ENCODE measurements at regions of chr14 and their contacts with region 1.

Region 1: DNA sequence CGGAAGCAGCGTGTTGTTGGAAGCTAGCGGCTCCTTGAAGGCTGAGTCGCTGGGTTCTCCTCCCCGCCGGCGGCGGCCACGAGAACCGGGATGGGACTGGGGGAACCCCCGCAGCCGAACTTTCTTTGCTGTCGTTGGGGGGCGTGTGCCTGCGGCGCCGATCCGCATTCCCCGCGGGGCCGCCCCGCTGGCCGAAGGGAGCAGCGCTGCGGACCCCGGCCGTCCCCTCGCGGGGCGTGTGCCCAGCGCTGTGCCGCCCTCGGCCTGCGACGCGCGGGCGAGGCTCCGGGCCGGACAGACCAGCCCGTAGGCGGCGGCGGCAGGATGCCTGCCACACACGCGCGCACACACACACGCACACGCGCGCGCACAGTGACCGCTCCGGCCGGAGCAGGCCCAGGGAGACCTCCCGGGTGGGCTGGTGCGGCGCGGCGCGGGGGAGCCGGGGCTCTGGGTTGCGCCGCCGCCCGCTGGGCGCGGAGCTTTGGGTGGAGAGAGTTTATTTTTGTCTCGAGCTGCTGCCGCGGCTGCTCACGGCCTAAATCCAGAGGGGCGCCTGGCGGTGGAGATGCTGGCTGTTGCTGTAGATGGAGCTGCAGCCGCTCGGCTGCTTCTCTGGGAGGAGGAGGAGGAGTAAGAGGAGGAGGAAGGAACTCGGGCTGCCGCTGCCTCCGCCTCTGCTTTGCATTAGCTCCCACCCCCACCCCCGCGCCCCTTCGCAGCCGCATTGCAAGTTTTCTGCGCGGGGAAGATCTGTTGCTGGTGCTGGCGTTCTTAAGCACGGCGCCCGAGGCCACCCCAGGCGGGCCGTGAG is at the start of gene SAMD4A:
- DNase-seq: no peak
- ATAC-seq: peak; percentile 46
- H3K4me3 ChIP-seq: peak within 1 kb of the TSS; percentile 79
- H3K27ac ChIP-seq: no peak within 1 kb of the TSS
- H3K4me1 ChIP-seq: peaks cover 12% of the 10 kb centered on the region; the same call in 1 of the 2 replicates
- H3K27me3 ChIP-seq: peaks cover 0 to 3% of the 10 kb centered on the region in 2 experiments; a peak in 1 of 4 replicates
- CTCF ChIP-seq: peak in 1 of 3 experiments; percentile 34; a peak in 2 of 6 replicates
- EP300 ChIP-seq: no peak
- POLR2A ChIP-seq: no peak
- RAD21 ChIP-seq: 0 out of 2 replicates have a peak, but pooled peaks have one; percentile 14
- polyA plus RNA-seq, gene SAMD4A: 0.29 to 0.33 TPM

Region 2: DNA sequence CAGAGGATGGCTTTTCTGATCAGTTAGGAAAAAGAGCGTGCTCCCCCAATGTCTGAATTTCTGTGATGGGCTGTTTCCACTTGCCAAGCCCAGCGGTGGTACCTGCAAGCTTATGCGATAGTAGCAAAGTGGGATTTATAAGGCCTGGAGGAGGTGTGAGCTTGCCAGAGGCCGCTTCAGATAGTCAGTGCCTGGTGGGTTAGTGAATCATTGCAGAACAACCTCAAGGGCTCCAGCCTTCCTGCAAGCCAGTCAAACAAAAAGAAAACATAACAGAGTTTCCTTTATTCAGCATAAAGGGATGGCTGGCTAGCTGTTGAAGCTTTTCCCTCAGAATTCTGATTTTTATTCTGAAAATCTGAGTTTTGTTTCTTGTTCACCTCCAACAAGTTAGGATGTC is 602.4 kb before region 1 on chr14:
- CTCF ChIA-PET with region 1: no interaction called
- POLR2A ChIA-PET with region 1: no interaction called
- RAD21 ChIA-PET with region 1: no interaction called
- SMC1A ChIA-PET with region 1: no interaction called
- in situ Hi-C with region 1: no loop called
- intact Hi-C with region 1: no loop called
- DNase-seq: no peak
- ATAC-seq: no peak
- H3K4me3 ChIP-seq: no peak overlapping the region
- H3K27ac ChIP-seq: no peak overlapping the region
- H3K4me1 ChIP-seq: no peaks in the 10 kb centered on the region
- H3K27me3 ChIP-seq: peaks cover 8 to 12% of the 10 kb centered on the region in 2 experiments
- CTCF ChIP-seq: no peak
- EP300 ChIP-seq: no peak
- POLR2A ChIP-seq: no peak
- RAD21 ChIP-seq: no peak

Region 3: DNA sequence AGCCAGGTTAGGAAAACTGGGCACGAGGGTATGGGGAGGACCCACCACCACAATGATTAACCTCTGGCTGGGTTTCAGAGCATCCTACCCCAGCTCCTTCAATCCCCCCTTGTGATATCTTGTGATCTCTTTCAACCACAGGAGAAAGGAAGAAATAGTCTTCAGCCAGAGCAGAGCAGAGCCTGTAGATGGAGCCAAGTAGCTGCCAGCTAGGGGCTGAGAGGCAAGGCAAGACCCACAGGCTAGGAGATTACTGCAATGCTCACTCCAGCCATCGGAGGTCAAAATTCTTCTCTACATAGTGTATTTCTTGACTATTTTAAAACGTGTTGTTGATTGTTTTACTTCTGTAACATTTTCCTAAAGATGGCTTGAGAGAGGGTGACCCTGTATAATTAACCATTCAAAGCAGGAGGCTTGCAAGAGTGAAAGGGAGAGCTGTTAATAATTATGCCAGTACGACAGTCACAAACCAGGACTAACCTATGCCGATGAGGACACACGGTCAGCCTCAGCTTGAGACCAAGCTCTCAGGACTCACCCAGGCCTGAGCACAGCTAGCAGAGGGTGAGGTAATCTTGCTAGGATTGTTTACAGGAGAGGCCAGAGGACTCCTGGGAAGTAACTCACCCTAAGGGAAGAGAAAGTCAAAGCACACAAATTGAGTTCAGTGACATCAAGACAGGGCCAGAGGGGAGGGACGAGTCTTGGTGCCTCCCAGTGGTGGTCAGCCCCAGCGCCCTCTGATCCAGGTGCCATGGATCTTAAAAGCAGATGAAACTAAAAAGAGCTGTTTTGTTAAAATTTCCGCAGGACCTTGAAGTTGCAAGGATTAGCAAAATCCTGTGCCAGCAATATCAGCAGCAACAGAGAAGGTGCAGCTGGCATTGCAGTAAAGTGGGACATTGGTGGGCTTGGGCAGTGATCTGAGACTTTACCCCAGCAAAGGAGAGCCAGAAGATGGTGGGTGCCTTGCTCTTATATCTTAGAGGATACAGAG is 199.6 kb before region 1 on chr14:
- CTCF ChIA-PET with region 1: no interaction called
- POLR2A ChIA-PET with region 1: no interaction called
- RAD21 ChIA-PET with region 1: interaction called, 3 read pairs
- SMC1A ChIA-PET with region 1: no interaction called
- in situ Hi-C with region 1: no loop called
- intact Hi-C with region 1: loop called (anchors 5 kb)
- DNase-seq: no peak
- ATAC-seq: peak; percentile 95
- H3K4me3 ChIP-seq: no peak overlapping the region
- H3K27ac ChIP-seq: no peak overlapping the region
- H3K4me1 ChIP-seq: no peaks in the 10 kb centered on the region
- H3K27me3 ChIP-seq: 0 out of 4 replicates have a peak, but pooled peaks cover 0 to 3% of the 10 kb centered on the region in 2 experiments
- CTCF ChIP-seq: peak; percentile 54 to 74 (median 58); a peak in 5 of 6 replicates
- EP300 ChIP-seq: no peak
- POLR2A ChIP-seq: no peak
- RAD21 ChIP-seq: peak; percentile 75

Region 4: GRCh38 chr14:54582334-54582733 is 15.7 kb after region 1 on chr14:
- CTCF ChIA-PET with region 1: interaction called, 6 read pairs
- POLR2A ChIA-PET with region 1: interaction called, 4 read pairs
- RAD21 ChIA-PET with region 1: interaction called, 5 read pairs
- SMC1A ChIA-PET with region 1: interaction called, 10 read pairs
- in situ Hi-C with region 1: no loop called
- intact Hi-C with region 1: no loop called
- DNase-seq: no peak
- ATAC-seq: no peak
- H3K4me3 ChIP-seq: no peak overlapping the region
- H3K27ac ChIP-seq: no peak overlapping the region
- H3K4me1 ChIP-seq: no peaks in the 10 kb centered on the region
- H3K27me3 ChIP-seq: no peaks in the 10 kb centered on the region
- CTCF ChIP-seq: no peak
- EP300 ChIP-seq: no peak
- POLR2A ChIP-seq: no peak
- RAD21 ChIP-seq: no peak

Region 5: GRCh38 chr14:54627540-54628363 is 61.1 kb after region 1 on chr14:
- CTCF ChIA-PET with region 1: interaction called, 17 read pairs
- POLR2A ChIA-PET with region 1: interaction called, 5 read pairs
- RAD21 ChIA-PET with region 1: interaction called, 6 read pairs
- SMC1A ChIA-PET with region 1: interaction called, 4 read pairs
- in situ Hi-C with region 1: no loop called
- intact Hi-C with region 1: loop called (anchors 2 kb)
- DNase-seq: peak; percentile 57
- ATAC-seq: peak; percentile 82
- H3K4me3 ChIP-seq: peak overlapping the region; percentile 39; the same call in 1 of the 2 replicates
- H3K27ac ChIP-seq: peak overlapping the region; percentile 51
- H3K4me1 ChIP-seq: peaks cover 19% of the 10 kb centered on the region
- H3K27me3 ChIP-seq: no peaks in the 10 kb centered on the region
- CTCF ChIP-seq: no peak
- EP300 ChIP-seq: 0 out of 4 replicates have a peak, but pooled peaks of 1 of the 2 experiments have one; percentile 35
- POLR2A ChIP-seq: no peak
- RAD21 ChIP-seq: no peak

Region 6: GRCh38 chr14:54683882-54684794 is 117.5 kb after region 1 on chr14:
- CTCF ChIA-PET with region 1: interaction called, 7 read pairs
- POLR2A ChIA-PET with region 1: no interaction called
- RAD21 ChIA-PET with region 1: interaction called, 4 read pairs
- SMC1A ChIA-PET with region 1: interaction called, 12 read pairs
- in situ Hi-C with region 1: no loop called
- intact Hi-C with region 1: no loop called
- DNase-seq: no peak
- ATAC-seq: peak; percentile 42; the same call in 1 of the 3 replicates
- H3K4me3 ChIP-seq: no peak overlapping the region
- H3K27ac ChIP-seq: no peak overlapping the region
- H3K4me1 ChIP-seq: no peaks in the 10 kb centered on the region
- H3K27me3 ChIP-seq: no peaks in the 10 kb centered on the region
- CTCF ChIP-seq: no peak
- EP300 ChIP-seq: no peak
- POLR2A ChIP-seq: no peak
- RAD21 ChIP-seq: no peak

Region 7: DNA sequence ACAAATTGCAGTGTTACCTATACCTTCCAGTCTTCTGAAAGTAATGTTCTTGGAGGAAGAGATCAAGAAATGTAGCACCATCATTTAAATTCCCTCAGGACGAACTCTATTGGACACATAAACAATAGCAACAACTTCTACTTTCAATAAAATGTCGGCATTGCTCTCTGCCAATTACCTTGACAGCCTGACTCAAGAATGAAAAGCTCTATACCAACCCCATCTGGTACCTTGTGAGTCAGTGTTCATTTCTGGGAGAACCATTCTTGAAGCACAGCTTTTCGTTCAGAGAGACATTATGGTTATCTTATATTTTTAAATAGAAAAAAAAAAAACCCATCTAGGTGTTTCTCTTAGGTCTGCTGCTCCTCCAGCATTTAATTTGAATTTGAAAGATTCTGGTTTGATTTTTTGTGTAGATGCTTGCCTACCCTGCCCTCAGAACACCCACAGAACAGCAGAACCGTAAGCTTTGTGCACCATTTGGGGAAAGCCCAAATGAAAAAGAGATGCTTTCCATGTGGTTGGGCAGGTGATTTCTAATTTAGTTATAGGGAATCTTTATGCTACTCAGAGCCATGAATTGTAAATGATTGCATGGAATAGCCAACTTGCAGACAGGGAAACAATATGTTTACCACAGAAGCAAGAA is 156.3 kb after region 1 on chr14:
- CTCF ChIA-PET with region 1: interaction called, 28 read pairs
- POLR2A ChIA-PET with region 1: no interaction called
- RAD21 ChIA-PET with region 1: interaction called, 24 read pairs
- SMC1A ChIA-PET with region 1: interaction called, 9 read pairs
- in situ Hi-C with region 1: no loop called
- intact Hi-C with region 1: loop called (anchors 2 kb)
- DNase-seq: no peak
- ATAC-seq: peak; percentile 75
- H3K4me3 ChIP-seq: no peak overlapping the region
- H3K27ac ChIP-seq: no peak overlapping the region
- H3K4me1 ChIP-seq: no peaks in the 10 kb centered on the region
- H3K27me3 ChIP-seq: no peaks in the 10 kb centered on the region; a peak in 1 of 4 replicates
- CTCF ChIP-seq: peak; percentile 43 to 56 (median 53); a peak in 5 of 6 replicates
- EP300 ChIP-seq: no peak
- POLR2A ChIP-seq: no peak
- RAD21 ChIP-seq: peak; percentile 85

Region 8: DNA sequence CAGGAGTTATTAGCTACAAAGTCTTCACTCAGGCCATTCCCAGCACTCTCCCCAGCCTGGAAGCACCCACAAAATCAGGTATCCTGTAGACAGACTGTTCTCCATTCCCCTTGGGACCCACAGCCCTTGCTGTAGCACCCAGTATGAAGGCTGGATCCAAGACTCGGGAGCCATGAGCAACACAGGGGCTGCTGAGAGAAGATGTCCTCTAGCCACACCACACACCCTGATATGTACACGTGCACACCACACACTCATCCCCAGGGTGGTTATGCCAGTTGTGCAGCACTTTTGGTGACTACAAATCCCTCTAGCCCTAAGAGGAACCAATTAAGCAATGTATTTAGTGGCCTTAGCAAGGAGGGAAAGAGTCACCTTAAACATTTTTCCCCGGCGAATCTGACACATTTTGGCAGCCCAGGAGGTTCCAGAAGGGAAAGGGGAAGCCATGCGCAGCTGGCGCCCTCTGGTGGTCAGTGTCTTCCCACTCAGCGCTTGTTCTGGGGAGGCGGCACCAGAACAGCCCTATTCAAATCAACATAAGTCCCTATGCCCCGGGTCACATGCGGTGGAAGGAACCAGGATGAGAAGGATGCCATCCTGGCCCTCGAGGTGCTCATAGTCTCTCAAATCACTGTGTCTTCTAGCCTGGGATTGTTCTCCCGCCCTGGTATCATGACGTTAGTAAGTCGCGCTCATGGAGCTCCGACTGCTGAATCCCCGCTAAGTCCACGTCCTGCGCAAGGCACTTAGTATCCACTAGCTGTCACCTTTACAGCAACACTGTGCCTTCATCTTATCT is 239.1 kb after region 1 on chr14:
- CTCF ChIA-PET with region 1: interaction called, 37 read pairs
- POLR2A ChIA-PET with region 1: no interaction called
- RAD21 ChIA-PET with region 1: interaction called, 12 read pairs
- SMC1A ChIA-PET with region 1: interaction called, 16 read pairs
- in situ Hi-C with region 1: no loop called
- intact Hi-C with region 1: loop called (anchors 1 kb)
- DNase-seq: peak; percentile 27
- ATAC-seq: peak; percentile 96
- H3K4me3 ChIP-seq: no peak overlapping the region
- H3K27ac ChIP-seq: no peak overlapping the region
- H3K4me1 ChIP-seq: no peaks in the 10 kb centered on the region
- H3K27me3 ChIP-seq: no peaks in the 10 kb centered on the region
- CTCF ChIP-seq: peak; percentile 91 to 94 (median 93)
- EP300 ChIP-seq: no peak
- POLR2A ChIP-seq: no peak
- RAD21 ChIP-seq: peak; percentile 89